Upper lobe of right lung (tissue), 1 donor: ENCODE measurements at regions of chr2 and their contacts with region 1.

Region 1: GRCh38 chr2:173205375-173205774 is 129.7 kb downstream of the MAP3K20 start:
- DNase-seq: no peak
- ATAC-seq: peak; percentile 87
- H3K4me3 ChIP-seq: no peak overlapping the region
- H3K27ac ChIP-seq: peak overlapping the region; percentile 24
- H3K4me1 ChIP-seq: no peaks in the 10 kb centered on the region
- H3K27me3 ChIP-seq: no peaks in the 10 kb centered on the region
- CTCF ChIP-seq: no peak

Region 2: DNA sequence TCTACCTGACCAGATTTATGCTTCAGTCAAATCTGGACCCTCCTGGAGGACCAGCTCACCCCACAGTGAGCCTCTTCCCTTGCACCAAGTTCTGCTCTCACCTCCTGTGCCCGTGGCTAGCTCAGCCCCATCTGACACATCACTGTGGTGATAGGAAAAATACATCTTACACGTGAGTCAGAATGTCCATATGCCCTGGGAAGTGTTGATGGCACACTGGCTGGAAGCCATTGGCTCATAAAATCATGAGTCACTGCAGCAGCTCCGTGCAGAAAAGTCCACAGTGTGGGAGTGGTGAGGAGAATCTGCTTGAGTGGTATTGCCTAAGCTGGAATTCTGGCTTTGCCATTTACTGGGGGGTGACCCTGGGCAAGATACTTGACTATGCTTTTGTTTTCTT is 512.3 kb before region 1 on chr2:
- intact Hi-C with region 1: no loop called
- DNase-seq: no peak
- ATAC-seq: peak; percentile 69
- H3K4me3 ChIP-seq: no peak overlapping the region
- H3K27ac ChIP-seq: no peak overlapping the region
- H3K4me1 ChIP-seq: no peaks in the 10 kb centered on the region
- H3K27me3 ChIP-seq: no peaks in the 10 kb centered on the region
- CTCF ChIP-seq: no peak

Region 3: GRCh38 chr2:173027181-173028128 is 177.9 kb before region 1 on chr2:
- intact Hi-C with region 1: loop called (anchors 10 kb)
- DNase-seq: no peak
- ATAC-seq: peak; percentile 96
- H3K4me3 ChIP-seq: no peak overlapping the region
- H3K27ac ChIP-seq: peak overlapping the region; percentile 37
- H3K4me1 ChIP-seq: peaks cover 9% of the 10 kb centered on the region
- H3K27me3 ChIP-seq: no peaks in the 10 kb centered on the region
- CTCF ChIP-seq: peak; percentile 95

Region 4: GRCh38 chr2:173090276-173090877 is 115.0 kb before region 1 on chr2:
- intact Hi-C with region 1: no loop called
- DNase-seq: peak; percentile 62
- ATAC-seq: peak; percentile 93
- H3K4me3 ChIP-seq: no peak overlapping the region
- H3K27ac ChIP-seq: no peak overlapping the region
- H3K4me1 ChIP-seq: peaks cover 28% of the 10 kb centered on the region
- H3K27me3 ChIP-seq: no peaks in the 10 kb centered on the region
- CTCF ChIP-seq: no peak

Region 5: DNA sequence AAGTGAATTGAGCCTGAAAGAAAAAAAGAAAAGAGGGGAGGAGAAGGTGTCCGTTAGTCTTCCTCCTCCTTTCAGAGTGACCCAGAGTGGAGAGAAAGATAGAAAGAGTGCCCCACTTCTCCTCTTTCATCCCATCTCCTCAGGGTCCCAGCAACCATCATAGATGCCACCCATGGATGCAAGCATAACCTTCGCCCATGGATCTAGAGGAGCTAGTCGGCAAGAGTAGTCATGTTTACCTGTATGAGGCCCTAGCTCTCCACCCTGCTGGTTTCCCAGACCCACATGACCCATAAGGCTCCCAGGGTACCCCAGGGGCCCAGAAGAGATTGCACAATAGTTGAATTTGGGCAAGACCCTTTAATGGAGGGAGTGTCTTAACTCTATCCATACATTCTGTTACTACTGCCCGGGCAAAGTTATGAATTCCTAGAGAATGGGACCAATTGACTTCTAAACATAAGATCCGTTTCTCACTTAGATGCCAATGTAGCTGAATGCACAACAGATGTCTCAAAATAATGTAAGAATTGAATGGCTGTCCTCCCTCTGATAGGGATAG is 93.2 kb after region 1 on chr2:
- intact Hi-C with region 1: no loop called
- DNase-seq: no peak
- ATAC-seq: no peak
- H3K4me3 ChIP-seq: no peak overlapping the region
- H3K27ac ChIP-seq: no peak overlapping the region
- H3K4me1 ChIP-seq: no peaks in the 10 kb centered on the region
- H3K27me3 ChIP-seq: no peaks in the 10 kb centered on the region
- CTCF ChIP-seq: no peak